ENCODE measurements at regions of chr12 and their contacts with region 1.

Region 1: DNA sequence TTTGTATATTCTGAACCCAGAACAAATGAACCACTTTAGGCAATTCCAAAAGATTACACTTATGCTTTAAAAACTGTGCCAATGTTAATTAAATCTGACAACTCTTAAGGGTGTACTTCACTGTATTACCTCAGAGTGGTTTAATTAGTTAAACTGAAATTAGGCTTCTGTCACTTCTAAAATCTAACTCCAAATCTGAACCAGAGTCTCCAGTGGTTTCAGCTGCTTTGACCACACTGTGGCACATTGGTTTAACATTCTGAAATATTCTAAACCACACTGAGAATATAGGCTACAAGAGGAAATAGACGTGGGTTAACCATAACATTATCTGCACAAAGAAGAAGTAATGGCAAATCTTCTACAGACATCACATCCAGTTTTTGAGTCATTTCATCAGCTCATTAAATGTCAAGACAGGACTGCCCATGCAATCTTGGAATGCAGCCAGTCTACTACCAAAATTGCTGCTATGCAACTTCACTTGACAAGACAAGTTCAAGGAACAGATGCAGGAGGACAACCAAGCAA is 94.8 kb downstream of the LRP6 start:
- DNase-seq: no peak
- ATAC-seq: no peak
- H3K4me3 ChIP-seq: no peak overlapping the region
- H3K27ac ChIP-seq: no peak overlapping the region
- H3K4me1 ChIP-seq: no peaks in the 10 kb centered on the region
- H3K27me3 ChIP-seq: no peaks in the 10 kb centered on the region

Region 2: DNA sequence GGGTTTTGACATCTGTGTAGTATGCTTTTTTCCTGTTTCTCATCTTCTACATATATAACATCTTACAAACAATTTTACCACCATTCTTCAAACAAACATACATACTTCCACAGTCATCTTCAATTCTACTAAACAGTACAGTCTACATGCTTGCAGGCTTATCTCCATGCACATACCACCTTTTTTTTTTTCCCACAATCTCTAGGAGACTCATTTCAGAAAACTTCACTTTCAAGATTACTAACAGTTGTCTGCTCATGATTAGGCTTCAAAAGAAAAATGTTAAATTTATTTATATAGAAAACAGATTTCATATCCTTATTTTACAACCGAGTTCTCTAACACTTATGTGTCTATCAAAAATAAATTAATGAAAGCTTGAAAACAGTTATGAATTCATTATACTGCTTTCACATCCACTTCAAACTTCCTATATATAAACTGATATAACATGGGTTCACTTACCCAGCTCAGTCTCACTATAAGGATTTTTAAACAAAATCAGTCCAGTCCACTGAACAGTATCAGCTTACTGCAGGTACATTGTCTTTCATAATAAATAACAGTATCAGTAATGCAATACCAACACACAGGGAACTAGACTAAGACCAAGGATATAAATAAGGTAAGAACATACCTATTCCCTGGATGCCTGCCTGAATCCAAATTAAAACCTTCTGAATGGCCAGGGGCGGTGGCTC is 52.3 kb after region 1 on chr12:
- intact Hi-C with region 1: no loop called
- DNase-seq: no peak
- ATAC-seq: no peak
- H3K4me3 ChIP-seq: no peak overlapping the region
- H3K27ac ChIP-seq: no peak overlapping the region
- H3K4me1 ChIP-seq: no peaks in the 10 kb centered on the region
- H3K27me3 ChIP-seq: no peaks in the 10 kb centered on the region

Region 3: GRCh38 chr12:12266873-12267741 is 95.1 kb after region 1 on chr12 and contains the start of gene LRP6:
- intact Hi-C with region 1: loop called in 1 of 4 experiments (anchors 10 kb)
- DNase-seq: peak; percentile 94 to 97 (median 96)
- ATAC-seq: peak; percentile 99
- H3K4me3 ChIP-seq: peak within 1 kb of the TSS; percentile 62
- H3K27ac ChIP-seq: peak within 1 kb of the TSS; percentile 89
- H3K4me1 ChIP-seq: no peaks in the 10 kb centered on the region
- H3K27me3 ChIP-seq: no peaks in the 10 kb centered on the region
- total RNA-seq, gene LRP6: 18.3 to 23.9 (median 21.1) TPM